ENCODE measurements at regions of chr6 and their contacts with region 1.

Region 1: DNA sequence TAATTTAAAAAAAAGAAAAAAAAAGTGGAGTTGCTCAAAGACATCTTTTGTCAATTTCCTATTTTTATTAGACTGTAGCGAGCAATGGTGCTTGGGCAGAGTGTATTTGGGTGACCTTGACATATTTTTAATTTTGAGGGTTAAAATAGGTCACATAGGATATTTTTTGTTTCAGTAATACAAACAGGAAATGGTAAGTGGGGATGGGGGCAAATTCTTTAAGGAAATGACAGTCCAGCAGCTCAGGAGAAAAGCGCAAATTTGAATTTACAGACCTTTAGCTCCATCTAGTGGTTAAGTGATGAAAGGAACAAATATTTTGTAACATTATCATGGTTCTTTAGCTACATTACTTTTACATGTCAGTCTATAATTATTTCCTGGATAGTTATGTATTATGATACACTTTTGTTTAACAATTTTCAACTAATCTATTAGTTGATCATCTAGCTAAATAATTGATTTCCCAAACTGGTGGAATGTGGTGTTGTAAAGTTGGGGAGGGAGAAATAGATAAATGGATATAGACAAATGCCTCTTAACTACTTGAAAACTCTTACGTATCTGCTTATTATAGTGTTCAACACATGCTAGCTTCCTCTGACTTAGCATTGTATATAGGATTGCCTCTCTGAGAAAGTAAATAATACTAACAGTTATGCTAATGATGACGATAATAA is 10.0 kb downstream of the CITED2 start:
- DNase-seq: no peak
- ATAC-seq: no peak

Region 2: DNA sequence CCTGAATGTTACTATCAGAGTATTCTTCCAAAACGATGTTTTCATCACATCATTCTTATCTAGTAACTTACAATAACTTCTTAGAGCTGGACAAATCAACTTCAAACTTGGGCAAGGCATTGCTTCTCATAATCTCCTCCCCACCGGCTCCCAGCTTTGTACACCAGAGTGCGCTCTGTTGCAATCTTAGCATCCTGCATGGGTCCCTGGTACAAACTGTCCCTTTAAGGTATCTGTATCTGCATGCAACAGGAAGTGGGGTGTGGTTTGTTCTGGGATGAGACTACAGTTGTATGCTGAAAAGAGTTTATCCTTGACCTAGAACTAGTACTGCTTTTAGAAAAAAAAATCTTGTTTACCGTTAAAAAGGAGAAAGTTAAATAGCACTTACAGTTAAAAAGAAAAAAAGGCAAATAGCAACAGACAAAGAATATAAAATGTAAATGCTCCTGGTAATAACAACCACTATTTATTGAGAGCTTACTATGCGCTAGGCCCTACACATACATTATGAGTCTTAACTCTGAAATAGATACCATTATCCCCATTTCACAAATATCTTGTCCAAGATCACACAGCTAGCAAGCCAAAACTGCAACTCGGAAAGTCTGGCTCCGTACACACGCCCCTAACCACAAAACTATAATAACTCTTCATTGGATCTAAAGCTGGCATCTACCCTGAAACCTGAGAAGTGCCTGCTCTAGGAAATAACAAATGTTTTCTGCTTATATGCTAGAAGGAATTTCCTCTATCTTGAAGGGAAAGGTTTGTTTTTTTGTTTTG is 239.4 kb before region 1 on chr6:
- intact Hi-C with region 1: loop called (anchors 1 kb)
- DNase-seq: peak; percentile 68
- ATAC-seq: peak; percentile 96

Region 3: GRCh38 chr6:139219271-139219729 is 145.1 kb before region 1 on chr6:
- intact Hi-C with region 1: loop called (anchors 1 kb)
- DNase-seq: peak; percentile 93
- ATAC-seq: peak; percentile 98

Region 4: DNA sequence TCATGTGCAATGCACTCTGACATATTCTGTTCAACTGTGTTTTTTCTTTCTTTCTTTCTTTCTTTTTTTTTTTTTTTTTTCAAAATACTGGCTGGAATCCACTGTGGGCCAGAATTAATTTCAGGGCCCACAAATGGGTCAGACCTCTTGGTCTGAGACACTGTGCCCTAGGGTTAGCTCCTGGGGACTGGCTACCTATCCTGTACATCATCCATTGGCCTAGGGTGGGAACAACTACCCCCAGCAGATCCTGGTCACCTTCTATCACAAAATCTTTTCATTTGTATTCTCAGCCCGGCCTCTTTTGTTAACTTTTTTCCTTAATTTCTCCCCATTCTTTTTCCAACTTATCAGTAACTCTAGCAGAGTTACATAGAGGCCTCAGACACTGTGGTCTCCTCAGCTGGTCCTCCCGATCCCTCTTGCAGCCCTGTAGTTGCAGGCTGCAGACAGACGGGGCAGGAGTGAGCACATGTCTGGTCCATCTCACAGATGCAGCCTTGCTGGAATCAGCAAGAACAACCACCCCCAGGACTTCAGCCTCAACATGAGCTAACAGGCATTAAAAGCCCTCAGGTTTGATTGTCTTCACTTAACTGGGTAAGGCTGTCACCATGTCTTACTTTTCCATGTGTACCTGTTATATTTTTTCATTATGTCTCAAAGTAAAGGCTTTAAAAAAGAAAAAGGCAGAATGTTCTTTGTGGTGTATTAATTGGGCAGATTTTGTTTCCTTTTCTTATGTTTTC is 114.0 kb before region 1 on chr6:
- intact Hi-C with region 1: loop called (anchors 1 kb)
- DNase-seq: no peak
- ATAC-seq: peak; percentile 84

Region 5: GRCh38 chr6:139409026-139409425 is 44.6 kb after region 1 on chr6:
- intact Hi-C with region 1: no loop called
- DNase-seq: no peak
- ATAC-seq: no peak